Activated T-helper 1 cell treated with anti-CD3 and anti-CD28 coated beads, Interleukin-12 subunit alpha, Interleukin-12 subunit beta, Interleukin-2, Interleukin-4 antibody, amounts not matched to agents 30 ng/mL and 10 ng/mL and 1 ng/mL, durations not matched to agents 14 hours and 24 hours and 36 hours (primary cell): ENCODE measurements at regions of chr13 and their contacts with region 1.

Region 1: GRCh38 chr13:41652727-41653361 is 195.5 kb downstream of the RGCC start:
- DNase-seq: no peak
- H3K4me3 Mint-ChIP-seq: no peak overlapping the region
- H3K27ac Mint-ChIP-seq: no peak overlapping the region
- H3K4me1 Mint-ChIP-seq: peaks cover 13% of the 10 kb centered on the region
- H3K27me3 Mint-ChIP-seq: no peaks in the 10 kb centered on the region

Region 2: GRCh38 chr13:40764587-40765403 is 888.0 kb before region 1 on chr13:
- intact Hi-C with region 1: no loop called
- DNase-seq: no peak
- H3K4me3 Mint-ChIP-seq: peak overlapping the region; percentile 23
- H3K27ac Mint-ChIP-seq: peak overlapping the region; percentile 88
- H3K4me1 Mint-ChIP-seq: peaks cover 39% of the 10 kb centered on the region
- H3K27me3 Mint-ChIP-seq: no peaks in the 10 kb centered on the region

Region 3: DNA sequence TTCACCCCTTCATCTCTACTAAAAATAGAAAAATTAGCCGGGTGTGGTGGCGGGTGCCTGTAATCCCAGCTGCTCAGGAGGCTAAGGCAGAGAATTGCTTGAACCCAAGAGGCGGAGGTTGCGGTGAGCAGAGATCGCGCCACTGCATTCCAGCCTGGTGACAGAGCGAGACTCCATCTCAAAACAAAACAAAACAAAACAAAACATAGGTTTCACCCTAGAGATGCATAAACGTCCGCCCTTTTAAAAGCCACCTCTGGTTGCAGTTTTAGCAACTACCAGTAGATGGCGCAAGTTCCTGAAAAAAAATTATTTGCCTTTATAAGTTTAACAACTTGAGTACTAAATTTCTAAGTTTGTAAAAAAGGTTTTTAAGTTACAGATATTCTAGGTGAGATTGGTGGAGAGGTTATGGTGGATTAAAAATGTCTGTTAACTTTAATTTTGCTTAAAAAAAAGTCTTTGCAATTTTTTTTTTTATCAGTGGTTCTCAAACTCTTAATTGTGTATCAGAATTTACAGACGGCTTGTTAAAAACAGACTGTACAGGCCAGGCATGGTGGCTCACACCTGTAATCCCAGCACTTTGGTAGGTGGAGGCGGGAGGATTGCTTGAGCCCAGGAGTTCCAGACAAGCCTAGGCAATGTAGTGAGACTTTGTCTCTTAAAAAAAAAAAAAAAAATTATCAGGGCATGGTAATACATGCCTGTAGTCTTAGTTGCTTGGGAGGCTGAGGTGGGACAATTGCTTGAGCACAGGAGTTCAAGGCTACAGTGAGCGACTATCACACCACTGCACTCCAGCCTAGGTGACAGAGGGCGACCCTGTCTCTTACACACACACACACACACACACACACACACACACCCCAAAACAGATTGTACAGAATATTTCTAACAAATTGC is 299.7 kb before region 1 on chr13:
- intact Hi-C with region 1: loop called (anchors 1 kb)
- DNase-seq: peak; percentile 47
- H3K4me3 Mint-ChIP-seq: no peak overlapping the region
- H3K27ac Mint-ChIP-seq: peak overlapping the region; percentile 24
- H3K4me1 Mint-ChIP-seq: peaks cover 38% of the 10 kb centered on the region
- H3K27me3 Mint-ChIP-seq: no peaks in the 10 kb centered on the region

Region 4: DNA sequence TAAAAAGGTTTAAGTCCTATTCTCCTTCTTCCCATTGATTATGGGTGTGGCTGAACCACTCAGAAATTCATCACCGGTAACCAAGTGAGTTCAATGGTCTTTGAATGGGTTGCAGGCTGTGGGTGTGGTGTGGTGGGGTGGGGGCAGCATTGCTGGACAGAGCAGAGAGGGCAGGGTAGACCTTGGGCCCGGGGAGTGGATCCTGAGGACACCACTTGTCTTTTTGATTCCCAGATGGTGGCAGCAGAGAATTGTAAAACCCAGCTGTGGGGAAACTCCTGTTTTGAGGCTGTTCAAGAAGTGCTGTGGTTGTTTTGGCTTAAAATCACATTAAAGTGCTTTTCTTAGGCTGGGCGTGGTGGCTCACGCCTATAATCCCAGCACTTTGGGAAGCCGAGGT is 241.3 kb before region 1 on chr13:
- intact Hi-C with region 1: loop called (anchors 1 kb)
- DNase-seq: no peak
- H3K4me3 Mint-ChIP-seq: no peak overlapping the region
- H3K27ac Mint-ChIP-seq: no peak overlapping the region
- H3K4me1 Mint-ChIP-seq: no peaks in the 10 kb centered on the region
- H3K27me3 Mint-ChIP-seq: peaks cover 7% of the 10 kb centered on the region

Region 5: GRCh38 chr13:41452462-41452861 is 200.4 kb before region 1 on chr13:
- intact Hi-C with region 1: no loop called
- DNase-seq: no peak
- H3K4me3 Mint-ChIP-seq: no peak overlapping the region
- H3K27ac Mint-ChIP-seq: no peak overlapping the region
- H3K4me1 Mint-ChIP-seq: peaks cover 13% of the 10 kb centered on the region
- H3K27me3 Mint-ChIP-seq: peaks cover 22% of the 10 kb centered on the region